ENCODE measurements at regions of chr6 and their contacts with region 1.

Region 1: DNA sequence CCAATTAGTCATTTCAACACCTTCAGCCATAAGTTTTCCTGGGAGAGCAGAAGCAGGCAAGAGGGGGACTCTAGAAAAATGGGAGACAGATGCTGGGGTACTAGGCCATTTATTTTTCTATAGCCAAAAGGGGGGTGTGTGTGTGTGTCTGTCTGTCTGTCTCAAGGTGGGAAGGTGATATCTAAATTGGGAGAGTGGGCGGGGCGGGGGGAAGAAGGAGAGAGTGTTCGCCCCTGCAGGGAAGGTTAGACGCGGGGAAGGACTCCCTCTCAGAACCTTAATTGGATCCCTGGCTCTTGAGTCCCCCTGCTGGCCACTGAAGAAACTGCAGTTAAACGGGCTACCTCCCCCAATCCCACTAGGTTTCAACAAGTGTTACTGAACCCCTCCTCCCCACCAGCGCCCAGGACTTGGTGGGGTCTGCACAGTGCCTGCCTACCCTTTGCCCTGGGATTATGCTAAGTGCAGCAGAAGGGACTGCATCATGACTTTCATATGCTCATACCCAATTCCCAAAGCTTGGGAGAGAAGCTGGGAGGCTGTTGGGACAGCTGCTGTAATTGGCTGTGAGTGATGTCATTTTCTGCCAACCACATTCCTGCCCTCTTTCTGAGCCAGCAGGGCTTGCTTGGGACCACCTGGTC is 45.8 kb downstream of the FOXP4 start:
- DNase-seq: peak; percentile 93
- H3K4me3 Mint-ChIP-seq: no peak overlapping the region
- H3K27ac Mint-ChIP-seq: no peak overlapping the region
- H3K4me1 Mint-ChIP-seq: peaks cover 2% of the 10 kb centered on the region
- H3K27me3 Mint-ChIP-seq: no peaks in the 10 kb centered on the region

Region 2: DNA sequence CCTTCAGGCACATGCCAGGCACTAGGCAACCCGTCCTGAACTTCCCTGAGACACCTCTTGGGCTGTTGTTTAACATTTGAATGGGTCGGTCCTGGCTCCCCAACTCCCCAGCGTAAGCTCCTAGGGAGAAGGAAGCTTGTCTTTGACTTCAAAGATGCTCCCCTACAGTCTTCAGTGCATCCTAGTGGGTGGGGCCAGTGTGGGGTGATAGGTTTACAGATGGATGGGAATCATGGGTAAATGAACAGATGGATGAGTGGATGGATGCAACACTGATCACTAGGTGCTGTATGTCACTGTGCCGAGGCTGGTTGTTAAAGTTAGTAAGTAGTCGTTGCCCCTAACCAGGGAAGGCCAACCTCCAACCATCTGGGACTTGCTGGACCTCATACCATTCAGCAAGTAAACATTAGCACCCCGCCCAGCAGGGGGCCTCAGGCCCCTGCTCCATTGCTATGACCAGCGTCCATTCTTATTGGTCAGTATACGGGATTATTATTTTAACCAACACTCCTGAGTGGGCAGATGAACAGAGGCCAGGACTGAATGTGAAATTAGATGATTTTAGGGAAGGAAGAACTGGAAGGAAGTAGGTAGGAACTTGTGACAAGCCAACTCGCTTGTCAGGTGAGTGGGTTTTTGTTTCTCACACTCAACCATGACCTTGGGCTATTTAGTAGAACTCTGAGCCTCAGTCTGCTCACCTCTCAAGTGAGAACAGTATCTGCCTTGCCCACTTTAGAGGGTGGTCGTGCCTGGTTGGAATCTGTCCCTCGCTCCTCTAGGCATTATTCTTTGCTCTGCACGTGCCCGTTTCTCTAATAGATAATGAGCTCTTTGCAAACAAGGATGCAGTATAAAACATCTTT is 128.7 kb before region 1 on chr6:
- intact Hi-C with region 1: loop called (anchors 1 kb)
- DNase-seq: no peak
- H3K4me3 Mint-ChIP-seq: no peak overlapping the region
- H3K27ac Mint-ChIP-seq: no peak overlapping the region
- H3K4me1 Mint-ChIP-seq: no peaks in the 10 kb centered on the region
- H3K27me3 Mint-ChIP-seq: peaks cover 63% of the 10 kb centered on the region